ENCODE measurements at regions of chr3 and their contacts with region 1.

Region 1: GRCh38 chr3:177724020-177724638 is 526.8 kb upstream of the TBL1XR1 start:
- DNase-seq: peak; percentile 23 to 89
- H3K4me3 ChIP-seq: no peak overlapping the region
- H3K27ac ChIP-seq: peak overlapping the region; percentile 66 to 74
- H3K4me1 ChIP-seq: peaks cover 3 to 33% of the 10 kb centered on the region in 2 donors
- H3K27me3 ChIP-seq: no peaks in the 10 kb centered on the region
- CTCF ChIP-seq: no peak

Region 2: GRCh38 chr3:177772908-177773557 is 48.9 kb after region 1 on chr3:
- intact Hi-C with region 1: loop called (anchors 5 kb)
- DNase-seq: no peak
- H3K4me3 ChIP-seq: no peak overlapping the region
- H3K27ac ChIP-seq: peak overlapping the region; percentile 70 to 82
- H3K4me1 ChIP-seq: peaks cover 4 to 39% of the 10 kb centered on the region in 2 donors
- H3K27me3 ChIP-seq: no peaks in the 10 kb centered on the region
- CTCF ChIP-seq: no peak

Measured in ascending aorta (tissue), 2 donors.